Activated CD4-positive, alpha-beta T cell treated with anti-CD3 and anti-CD28 coated beads for 36 hours (primary cell): ENCODE measurements at regions of chrX and their contacts with region 1.

Region 1: DNA sequence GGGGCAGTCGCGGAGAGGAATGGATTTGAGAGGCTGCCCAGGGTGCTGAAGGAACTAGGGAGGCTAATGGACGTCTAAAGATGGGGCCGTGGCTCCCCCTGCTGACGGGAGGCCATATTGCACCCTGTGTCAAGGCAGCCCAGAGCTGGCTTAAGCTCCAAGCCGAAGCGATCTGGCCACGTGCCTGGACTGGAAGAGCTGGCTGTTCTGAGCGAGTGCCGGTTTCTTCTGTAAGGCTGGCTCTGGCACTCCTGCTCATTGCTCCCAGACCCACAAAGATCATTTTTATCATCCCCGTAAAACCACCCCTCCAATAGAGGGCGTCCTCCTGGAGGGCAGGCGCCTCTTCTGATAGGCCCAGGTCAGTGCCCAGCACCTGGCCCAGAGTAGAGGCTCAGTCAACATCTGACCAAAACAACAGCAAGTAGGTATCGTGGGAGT is 5.6 kb downstream of the PNCK start:
- DNase-seq: peak; percentile 88
- ATAC-seq: peak; percentile 92
- H3K4me3 Mint-ChIP-seq: peak overlapping the region; percentile 70
- H3K27ac Mint-ChIP-seq: no peak overlapping the region
- H3K4me1 Mint-ChIP-seq: peaks cover 7% of the 10 kb centered on the region
- H3K27me3 Mint-ChIP-seq: peaks cover 7% of the 10 kb centered on the region

Region 2: GRCh38 chrX:153032397-153033118 is 635.4 kb before region 1 on chrX:
- CTCF ChIA-PET with region 1: interaction called, 3 read pairs
- POLR2A ChIA-PET with region 1: no interaction called
- intact Hi-C with region 1: loop called in 1 of 2 experiments (anchors 5 kb)
- DNase-seq: peak; percentile 78
- ATAC-seq: peak; percentile 85
- H3K4me3 Mint-ChIP-seq: peak overlapping the region; percentile 76
- H3K27ac Mint-ChIP-seq: peak overlapping the region; percentile 84
- H3K4me1 Mint-ChIP-seq: peaks cover 2% of the 10 kb centered on the region
- H3K27me3 Mint-ChIP-seq: no peaks in the 10 kb centered on the region

Region 3: DNA sequence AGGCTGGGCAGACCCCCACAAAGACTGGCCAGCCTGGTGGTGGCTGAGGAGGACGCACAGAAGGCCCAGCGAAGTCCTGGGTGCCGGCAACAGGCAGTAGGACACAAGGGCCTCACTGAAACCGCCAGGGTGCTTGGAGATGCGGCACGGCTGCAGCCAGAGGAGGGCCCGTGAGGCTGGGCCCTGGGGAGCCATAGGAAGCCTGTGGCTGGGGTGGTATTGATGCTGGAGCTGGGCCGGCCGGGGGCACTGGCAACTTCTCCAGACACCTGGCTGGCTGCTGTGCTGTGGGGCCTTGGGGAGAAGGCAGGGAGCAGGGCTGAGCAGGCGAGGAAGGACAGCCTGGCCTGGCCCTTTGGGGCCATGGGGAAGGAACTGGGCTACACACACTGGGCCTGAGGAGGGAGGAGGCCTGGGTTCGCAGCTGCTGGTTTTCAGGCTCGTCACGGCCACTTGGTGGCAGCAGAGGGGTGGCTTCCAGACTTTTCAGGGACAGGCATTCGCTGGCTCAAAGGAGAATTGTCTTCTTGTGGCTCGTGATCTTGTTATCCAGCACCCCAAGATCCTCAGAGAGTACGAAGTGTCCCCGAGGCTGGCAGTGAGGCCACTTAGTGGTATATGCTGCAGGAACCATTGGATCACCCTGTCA is 113.3 kb before region 1 on chrX:
- CTCF ChIA-PET with region 1: interaction called, 14 read pairs
- POLR2A ChIA-PET with region 1: no interaction called
- intact Hi-C with region 1: loop called (anchors 1 to 5 kb)
- DNase-seq: peak; percentile 76
- ATAC-seq: peak; percentile 66
- H3K4me3 Mint-ChIP-seq: no peak overlapping the region
- H3K27ac Mint-ChIP-seq: no peak overlapping the region
- H3K4me1 Mint-ChIP-seq: no peaks in the 10 kb centered on the region
- H3K27me3 Mint-ChIP-seq: no peaks in the 10 kb centered on the region

Region 4: DNA sequence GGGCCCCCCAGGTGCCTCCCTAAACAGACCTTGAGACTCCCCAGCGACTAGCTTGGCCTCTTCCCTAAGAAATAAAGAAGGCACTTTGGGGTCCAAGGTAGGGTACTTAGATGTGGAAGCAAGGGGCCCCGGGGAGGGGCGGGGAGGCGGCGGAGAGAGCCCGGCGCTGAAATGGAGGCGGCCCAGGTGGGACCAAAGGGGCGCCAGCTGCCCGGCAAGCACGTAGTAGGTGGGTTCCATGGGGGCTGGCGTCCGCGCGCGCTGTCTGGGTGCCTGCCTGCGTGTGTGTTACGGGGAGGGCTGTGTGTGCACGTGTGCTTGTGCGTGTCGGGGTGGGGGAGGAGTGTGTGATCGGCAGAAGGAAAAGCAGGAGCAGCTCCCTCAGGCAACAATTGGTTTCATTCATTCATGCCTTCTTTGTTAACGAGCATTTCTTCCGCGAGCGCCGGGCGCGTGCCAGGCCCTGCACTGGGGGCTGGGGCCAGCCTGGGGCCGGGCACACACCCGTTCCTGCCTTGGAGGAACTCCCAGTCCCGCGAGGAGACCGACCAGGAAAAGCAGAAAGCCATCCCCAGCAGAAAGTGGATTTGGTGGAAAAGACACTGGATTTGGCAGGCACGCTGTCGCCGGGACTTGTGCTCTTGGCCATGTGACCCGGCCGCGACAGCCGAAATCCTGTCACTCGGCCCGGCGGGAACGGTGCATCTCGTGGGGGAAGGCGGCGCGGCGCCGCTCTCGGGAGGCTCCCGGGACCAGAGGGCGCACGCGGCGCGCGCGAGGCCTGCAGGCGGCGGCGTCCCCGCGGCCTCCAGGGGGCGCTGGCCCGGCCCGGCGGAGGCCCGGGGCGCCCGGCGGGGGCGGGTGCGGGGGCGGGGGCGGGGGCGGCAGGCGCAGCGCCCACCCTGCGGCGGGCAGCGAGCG is 24.3 kb before region 1 on chrX:
- CTCF ChIA-PET with region 1: interaction called, 12 read pairs
- POLR2A ChIA-PET with region 1: no interaction called
- intact Hi-C with region 1: no loop called
- DNase-seq: no peak
- ATAC-seq: no peak
- H3K4me3 Mint-ChIP-seq: no peak overlapping the region
- H3K27ac Mint-ChIP-seq: no peak overlapping the region
- H3K4me1 Mint-ChIP-seq: peaks cover 12% of the 10 kb centered on the region
- H3K27me3 Mint-ChIP-seq: peaks cover 33% of the 10 kb centered on the region

Region 5: DNA sequence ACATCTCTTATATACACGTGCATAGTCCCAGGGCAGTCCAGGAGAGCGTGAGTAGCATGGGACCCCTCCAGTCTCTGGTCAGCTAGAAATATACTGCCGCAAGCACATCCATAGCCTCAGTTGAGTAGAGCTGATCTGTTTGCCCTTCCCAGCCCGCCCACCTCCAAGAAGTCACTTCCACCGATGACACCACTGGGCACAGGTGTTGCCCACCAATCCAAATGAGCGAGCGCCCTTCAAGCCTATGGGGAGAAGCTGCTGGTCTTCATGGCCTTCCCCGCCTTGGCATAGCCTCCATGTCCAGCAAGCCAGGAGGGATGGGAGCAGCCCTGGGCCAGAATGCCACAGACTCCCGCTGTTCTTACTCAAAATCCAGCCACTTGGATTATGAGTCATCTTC is 10.8 kb before region 1 on chrX:
- CTCF ChIA-PET with region 1: interaction called, 24 read pairs
- POLR2A ChIA-PET with region 1: no interaction called
- intact Hi-C with region 1: no loop called
- DNase-seq: no peak
- ATAC-seq: no peak
- H3K4me3 Mint-ChIP-seq: no peak overlapping the region
- H3K27ac Mint-ChIP-seq: no peak overlapping the region
- H3K4me1 Mint-ChIP-seq: peaks cover 3% of the 10 kb centered on the region
- H3K27me3 Mint-ChIP-seq: peaks cover 4% of the 10 kb centered on the region

Region 6: DNA sequence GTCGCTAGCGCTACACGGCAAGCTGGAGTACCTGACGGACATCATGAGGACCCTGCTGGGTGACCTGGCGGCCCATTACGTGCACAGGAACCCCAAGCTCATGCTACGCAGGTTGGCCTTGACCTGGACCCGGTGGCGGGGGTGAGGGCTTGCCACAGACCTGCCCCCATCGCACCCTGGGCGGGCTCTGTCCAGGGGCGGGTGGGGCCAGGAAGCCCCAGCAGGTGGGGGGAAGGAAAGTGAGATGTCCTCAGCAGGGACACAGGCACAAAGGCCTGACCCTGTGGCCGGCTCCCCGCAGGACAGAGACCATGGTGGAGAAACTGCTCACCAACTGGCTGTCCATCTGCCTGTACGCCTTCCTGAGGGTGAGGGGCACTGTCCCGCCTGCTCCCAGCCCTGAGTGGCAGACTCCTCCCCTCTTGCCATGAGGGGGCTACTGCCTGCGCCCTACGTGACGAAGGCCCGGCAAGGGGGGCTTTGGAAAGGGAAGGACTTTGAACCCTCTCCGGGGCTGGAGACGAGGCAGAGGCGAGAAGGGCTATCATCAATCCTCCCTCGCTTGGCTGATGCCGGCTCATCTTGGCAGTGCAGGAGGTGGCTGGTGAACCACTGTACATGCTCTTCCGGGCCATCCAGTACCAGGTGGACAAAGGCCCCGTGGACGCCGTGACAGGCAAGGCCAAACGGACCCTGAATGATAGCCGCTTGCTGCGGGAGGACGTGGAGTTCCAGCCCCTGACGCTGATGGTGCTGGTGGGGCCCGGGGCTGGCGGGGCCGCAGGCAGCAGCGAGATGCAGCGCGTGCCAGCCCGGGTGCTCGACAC is 107.5 kb after region 1 on chrX:
- CTCF ChIA-PET with region 1: no interaction called
- POLR2A ChIA-PET with region 1: no interaction called
- intact Hi-C with region 1: no loop called
- DNase-seq: peak; percentile 2
- ATAC-seq: no peak
- H3K4me3 Mint-ChIP-seq: no peak overlapping the region
- H3K27ac Mint-ChIP-seq: no peak overlapping the region
- H3K4me1 Mint-ChIP-seq: peaks cover 6% of the 10 kb centered on the region
- H3K27me3 Mint-ChIP-seq: peaks cover 3% of the 10 kb centered on the region

Region 7: DNA sequence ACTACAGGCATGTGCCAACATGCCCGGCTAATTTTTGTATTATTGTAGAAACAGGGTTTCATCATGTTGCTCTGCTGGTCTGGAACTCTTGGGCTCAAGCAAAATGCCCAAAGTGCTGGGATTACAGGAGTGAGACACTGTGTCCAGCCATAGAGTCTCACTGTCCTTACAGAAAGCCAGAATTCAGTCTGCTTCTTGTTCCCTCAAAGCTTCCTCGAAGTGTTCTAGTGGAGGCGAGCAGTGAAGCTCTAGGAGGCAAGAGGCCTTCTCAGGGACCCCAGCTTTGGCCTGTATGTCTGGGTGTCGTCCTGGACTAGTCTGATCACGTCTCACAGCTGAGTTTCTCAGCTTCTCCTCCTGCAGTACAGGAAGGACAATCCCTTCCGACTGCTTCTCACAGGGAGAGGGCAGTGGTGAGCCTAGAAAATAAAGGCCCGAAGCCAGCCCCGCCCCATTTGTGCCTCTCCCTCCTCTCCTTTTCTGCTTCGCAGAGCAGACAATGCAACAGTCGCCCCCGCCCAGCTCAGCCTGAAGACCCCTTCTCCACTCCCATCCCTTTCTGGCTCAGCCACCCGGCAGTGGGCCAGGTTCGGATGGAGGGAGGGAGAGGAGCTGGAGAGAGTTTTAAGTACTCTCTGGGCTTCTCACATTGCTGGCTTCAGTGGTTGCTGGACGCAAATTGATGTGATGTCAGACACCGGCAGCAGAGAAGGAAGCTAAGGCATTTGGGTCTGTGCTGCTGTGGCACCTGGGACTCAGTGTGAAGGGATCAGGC is 859.1 kb after region 1 on chrX:
- CTCF ChIA-PET with region 1: no interaction called
- POLR2A ChIA-PET with region 1: no interaction called
- intact Hi-C with region 1: no loop called
- DNase-seq: peak; percentile 81
- ATAC-seq: peak; percentile 98
- H3K4me3 Mint-ChIP-seq: no peak overlapping the region
- H3K27ac Mint-ChIP-seq: no peak overlapping the region
- H3K4me1 Mint-ChIP-seq: peaks cover 18% of the 10 kb centered on the region
- H3K27me3 Mint-ChIP-seq: no peaks in the 10 kb centered on the region

Region 8: GRCh38 chrX:154998204-154998880 is 1330.4 kb after region 1 on chrX:
- CTCF ChIA-PET with region 1: no interaction called
- POLR2A ChIA-PET with region 1: no interaction called
- intact Hi-C with region 1: no loop called
- DNase-seq: no peak
- ATAC-seq: no peak
- H3K4me3 Mint-ChIP-seq: no peak overlapping the region
- H3K27ac Mint-ChIP-seq: no peak overlapping the region
- H3K4me1 Mint-ChIP-seq: peaks cover 4% of the 10 kb centered on the region
- H3K27me3 Mint-ChIP-seq: peaks cover 5% of the 10 kb centered on the region